WTC11 (cell line): ENCODE measurements at regions of chr11 and their contacts with region 1.

Region 1: DNA sequence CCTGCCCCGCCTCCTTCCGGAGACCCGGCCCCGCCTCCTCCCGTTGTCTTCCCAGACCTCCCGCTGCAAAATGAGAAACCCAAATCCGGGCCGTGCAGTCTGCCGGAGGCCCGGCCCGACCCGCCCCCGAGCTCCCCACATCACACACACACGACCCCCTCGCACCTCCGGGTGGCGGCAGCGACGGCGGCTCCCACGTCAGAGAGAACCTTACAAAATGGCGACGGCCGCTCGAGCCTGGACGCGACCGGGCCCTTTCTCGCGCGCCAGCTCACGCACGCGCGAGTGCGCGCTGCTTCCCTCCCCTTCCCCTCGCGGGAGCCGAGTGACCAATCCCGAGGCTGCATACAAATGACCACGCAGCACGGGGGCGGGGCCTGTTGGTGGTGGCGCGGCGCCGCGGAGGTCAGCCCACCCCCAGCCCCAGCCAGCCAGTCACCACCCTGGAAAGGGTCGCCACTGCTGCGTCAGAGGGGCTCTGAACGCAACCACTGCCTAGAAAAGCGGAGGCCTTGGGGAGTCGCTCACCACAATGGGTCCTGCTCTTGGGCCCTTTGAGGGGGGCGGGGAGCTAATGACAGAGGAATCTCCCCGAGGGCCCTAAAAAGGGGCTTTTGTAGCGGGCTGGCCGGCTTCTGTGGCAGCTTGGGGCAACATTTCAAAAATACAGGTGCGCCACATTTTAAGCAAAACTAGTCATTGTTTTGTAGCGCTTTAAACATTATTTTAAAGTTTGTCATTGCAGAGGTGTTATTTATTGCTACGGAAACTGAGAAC is at the start of gene RBM4B:
- DNase-seq: peak; percentile 98
- ATAC-seq: peak; percentile 95
- H3K4me3 Mint-ChIP-seq: peak within 1 kb of the TSS; percentile 89
- H3K27ac Mint-ChIP-seq: peak within 1 kb of the TSS; percentile 100
- H3K4me1 Mint-ChIP-seq: peaks cover 29% of the 10 kb centered on the region
- H3K27me3 Mint-ChIP-seq: no peaks in the 10 kb centered on the region
- CTCF ChIP-seq: no peak
- total RNA-seq, gene RBM4B: 14.1 to 21.3 TPM (median 20.3 TPM) in 3 replicates

Region 2: DNA sequence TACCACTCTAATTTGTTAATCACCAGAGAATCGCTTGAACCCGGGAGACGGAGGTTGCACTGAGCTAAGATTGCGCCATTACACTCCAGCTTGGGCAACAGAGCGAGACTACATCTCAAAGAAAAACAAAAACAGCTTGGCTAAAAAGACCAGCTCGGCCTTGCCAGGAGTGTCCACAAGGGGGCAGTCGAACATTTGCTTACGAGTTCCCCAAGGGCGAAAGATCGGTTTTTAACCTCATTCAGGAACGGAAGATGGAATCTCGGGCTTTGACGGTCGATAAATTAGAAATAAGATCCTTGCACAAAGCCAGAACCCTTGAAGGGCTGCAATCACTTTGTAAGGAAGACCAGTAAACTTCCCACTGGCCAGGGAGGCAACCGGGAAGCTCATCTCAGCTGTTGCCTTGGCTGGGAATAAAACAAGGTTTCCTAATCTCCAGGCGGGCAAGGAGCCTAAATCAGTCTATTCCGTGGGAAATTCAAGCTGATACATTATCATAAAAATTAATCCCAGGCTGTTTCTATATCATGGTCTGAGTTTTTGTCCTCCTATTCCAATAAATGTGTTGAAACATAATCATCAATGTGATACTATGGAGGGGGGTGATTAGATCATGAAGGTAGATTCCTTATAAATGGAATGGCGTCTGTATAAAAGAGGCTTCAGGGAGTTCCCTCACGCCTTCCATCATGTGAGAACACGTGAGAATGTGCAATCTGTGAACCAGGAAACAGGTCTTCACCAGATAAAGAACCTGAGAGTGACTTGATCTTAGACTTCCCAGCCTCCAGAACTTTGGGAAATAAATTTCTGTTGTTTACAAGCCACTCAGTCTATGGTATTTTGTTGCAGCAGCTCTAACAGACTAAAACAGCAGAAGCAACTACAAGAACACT is 291.4 kb before region 1 on chr11:
- CTCF ChIA-PET with region 1: interaction called, 22 read pairs
- POLR2A ChIA-PET with region 1: interaction called, 3 read pairs
- DNase-seq: peak; percentile 95
- ATAC-seq: peak; percentile 74
- H3K4me3 Mint-ChIP-seq: peak overlapping the region; percentile 64
- H3K27ac Mint-ChIP-seq: no peak overlapping the region
- H3K4me1 Mint-ChIP-seq: peaks cover 6% of the 10 kb centered on the region; the same call in 1 of the 2 replicates
- H3K27me3 Mint-ChIP-seq: peaks cover 13% of the 10 kb centered on the region
- CTCF ChIP-seq: peak; percentile 79

Region 3: DNA sequence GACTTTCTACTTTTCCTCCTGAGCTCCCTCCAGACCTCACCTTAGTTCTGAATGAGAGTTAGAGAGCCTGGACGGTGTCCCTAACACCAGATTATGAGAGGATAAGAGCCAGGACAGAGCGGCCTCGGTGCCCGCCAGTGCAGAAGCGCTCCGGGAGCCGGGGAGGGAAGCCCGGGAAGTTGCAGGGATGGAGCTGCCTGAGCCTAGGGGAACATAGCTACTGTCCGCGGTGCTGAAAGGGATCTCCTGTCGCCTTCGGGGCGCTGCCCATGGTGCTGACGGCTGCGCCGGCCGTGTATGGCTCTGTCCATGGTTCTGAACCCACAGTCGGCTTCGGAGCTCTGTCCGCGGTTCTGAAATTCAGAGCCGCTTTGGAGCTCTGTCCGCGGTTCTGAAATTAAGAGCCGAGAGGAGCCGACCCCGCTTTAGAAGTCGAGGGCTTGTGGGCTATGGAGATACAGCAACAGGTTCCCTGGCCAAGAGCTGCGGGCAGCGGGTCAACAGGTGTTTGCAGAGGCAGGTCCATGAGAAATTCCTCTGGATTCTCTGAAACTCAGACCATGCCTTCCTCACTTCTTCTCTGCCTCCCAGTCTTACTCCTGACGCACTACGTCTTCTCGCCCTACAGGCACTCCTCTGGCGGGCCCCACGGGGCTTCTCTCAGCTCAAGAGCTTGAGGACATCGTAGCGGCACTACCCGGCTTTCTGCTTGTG is 256.1 kb before region 1 on chr11:
- CTCF ChIA-PET with region 1: interaction called, 42 read pairs
- POLR2A ChIA-PET with region 1: interaction called, 5 read pairs
- DNase-seq: peak; percentile 95
- ATAC-seq: peak; percentile 55
- H3K4me3 Mint-ChIP-seq: peak overlapping the region; percentile 68
- H3K27ac Mint-ChIP-seq: no peak overlapping the region
- H3K4me1 Mint-ChIP-seq: peaks cover 27% of the 10 kb centered on the region
- H3K27me3 Mint-ChIP-seq: peaks cover 77% of the 10 kb centered on the region
- CTCF ChIP-seq: no peak

Region 4: GRCh38 chr11:66480117-66480938 is 197.5 kb before region 1 on chr11 and contains the start of gene DPP3:
- CTCF ChIA-PET with region 1: interaction called, 26 read pairs
- POLR2A ChIA-PET with region 1: interaction called, 17 read pairs
- DNase-seq: peak; percentile 99
- ATAC-seq: peak; percentile 90
- H3K4me3 Mint-ChIP-seq: peak within 1 kb of the TSS; percentile 95
- H3K27ac Mint-ChIP-seq: peak within 1 kb of the TSS; percentile 95
- H3K4me1 Mint-ChIP-seq: peaks cover 26% of the 10 kb centered on the region
- H3K27me3 Mint-ChIP-seq: no peaks in the 10 kb centered on the region
- CTCF ChIP-seq: no peak
- total RNA-seq, gene DPP3: 77.0 to 86.7 TPM (median 83.4 TPM) in 3 replicates

Region 5: DNA sequence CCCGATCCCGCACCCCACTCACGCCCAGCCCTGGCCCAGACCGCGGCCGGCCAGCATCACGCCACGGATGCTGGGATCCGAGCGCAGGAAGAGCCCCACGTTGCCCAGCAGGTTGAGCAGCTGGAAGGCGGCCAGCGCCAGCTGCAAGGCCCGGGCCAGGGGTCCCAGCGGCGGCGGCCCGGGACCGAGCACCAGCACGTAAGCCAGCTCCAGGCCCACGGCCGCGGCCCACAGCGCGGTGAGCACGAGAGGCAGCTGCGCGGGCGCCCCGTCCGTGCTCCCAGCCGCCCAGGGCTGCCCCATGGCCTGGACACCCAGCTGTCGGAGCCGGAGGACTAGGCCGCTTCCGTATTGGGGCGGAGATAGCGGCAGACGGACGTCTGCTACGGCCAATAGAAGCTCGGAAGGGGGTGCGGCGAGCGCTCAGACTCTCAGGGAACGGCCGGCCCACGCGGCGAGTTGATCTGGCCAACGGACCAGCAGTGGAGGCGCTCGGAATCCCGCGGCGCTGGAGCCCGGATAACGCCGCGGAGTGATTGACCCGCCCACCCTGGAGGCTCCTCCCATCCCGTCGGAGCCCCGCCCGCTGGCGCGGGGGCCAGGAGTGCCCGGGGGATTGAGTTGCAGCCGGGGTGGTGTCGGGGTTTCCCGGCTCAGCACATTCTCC is 132.0 kb before region 1 on chr11 and contains the start of gene ZDHHC24:
- CTCF ChIA-PET with region 1: interaction called, 34 read pairs
- POLR2A ChIA-PET with region 1: interaction called, 23 read pairs
- DNase-seq: peak; percentile 98
- ATAC-seq: peak; percentile 85
- H3K4me3 Mint-ChIP-seq: peak within 1 kb of the TSS; percentile 85
- H3K27ac Mint-ChIP-seq: peak within 1 kb of the TSS; percentile 93
- H3K4me1 Mint-ChIP-seq: peaks cover 38% of the 10 kb centered on the region
- H3K27me3 Mint-ChIP-seq: no peaks in the 10 kb centered on the region
- CTCF ChIP-seq: no peak
- total RNA-seq, gene ZDHHC24: 11.1 to 14.8 TPM (median 13.7 TPM) in 3 replicates

Region 6: DNA sequence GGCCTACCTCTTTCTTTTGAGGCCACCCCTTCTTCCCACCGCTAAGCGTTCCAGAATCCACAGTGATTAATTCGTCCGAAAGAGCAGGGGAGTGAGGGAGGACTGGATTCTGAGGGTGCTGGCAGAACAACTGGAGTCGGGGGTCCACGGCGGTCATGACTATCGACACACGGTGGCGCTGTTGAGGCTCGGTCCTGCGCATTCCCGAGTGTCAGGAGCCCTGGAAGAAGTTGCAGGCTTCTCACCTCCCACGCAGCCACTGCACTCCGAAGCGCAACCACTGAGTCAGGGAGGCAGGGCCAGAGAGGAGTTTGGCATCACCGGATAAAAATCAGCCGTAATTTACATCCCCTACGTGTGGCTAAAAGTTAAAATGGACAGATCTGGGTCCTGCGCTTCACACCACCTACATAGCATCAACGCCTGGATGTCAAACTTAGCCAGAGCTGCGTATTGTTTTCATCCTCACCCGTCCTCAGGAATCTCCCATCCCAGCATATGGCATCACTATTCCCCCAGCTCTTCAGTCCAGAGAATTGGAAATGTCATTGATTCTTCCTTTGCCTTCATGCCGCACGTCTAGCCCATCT is 98.7 kb before region 1 on chr11:
- CTCF ChIA-PET with region 1: interaction called, 11 read pairs
- POLR2A ChIA-PET with region 1: interaction called, 3 read pairs
- DNase-seq: peak; percentile 88
- ATAC-seq: peak; percentile 95
- H3K4me3 Mint-ChIP-seq: no peak overlapping the region
- H3K27ac Mint-ChIP-seq: no peak overlapping the region
- H3K4me1 Mint-ChIP-seq: peaks cover 3% of the 10 kb centered on the region; the same call in 1 of the 2 replicates
- H3K27me3 Mint-ChIP-seq: peaks cover 40% of the 10 kb centered on the region
- CTCF ChIP-seq: peak; percentile 82

Region 7: DNA sequence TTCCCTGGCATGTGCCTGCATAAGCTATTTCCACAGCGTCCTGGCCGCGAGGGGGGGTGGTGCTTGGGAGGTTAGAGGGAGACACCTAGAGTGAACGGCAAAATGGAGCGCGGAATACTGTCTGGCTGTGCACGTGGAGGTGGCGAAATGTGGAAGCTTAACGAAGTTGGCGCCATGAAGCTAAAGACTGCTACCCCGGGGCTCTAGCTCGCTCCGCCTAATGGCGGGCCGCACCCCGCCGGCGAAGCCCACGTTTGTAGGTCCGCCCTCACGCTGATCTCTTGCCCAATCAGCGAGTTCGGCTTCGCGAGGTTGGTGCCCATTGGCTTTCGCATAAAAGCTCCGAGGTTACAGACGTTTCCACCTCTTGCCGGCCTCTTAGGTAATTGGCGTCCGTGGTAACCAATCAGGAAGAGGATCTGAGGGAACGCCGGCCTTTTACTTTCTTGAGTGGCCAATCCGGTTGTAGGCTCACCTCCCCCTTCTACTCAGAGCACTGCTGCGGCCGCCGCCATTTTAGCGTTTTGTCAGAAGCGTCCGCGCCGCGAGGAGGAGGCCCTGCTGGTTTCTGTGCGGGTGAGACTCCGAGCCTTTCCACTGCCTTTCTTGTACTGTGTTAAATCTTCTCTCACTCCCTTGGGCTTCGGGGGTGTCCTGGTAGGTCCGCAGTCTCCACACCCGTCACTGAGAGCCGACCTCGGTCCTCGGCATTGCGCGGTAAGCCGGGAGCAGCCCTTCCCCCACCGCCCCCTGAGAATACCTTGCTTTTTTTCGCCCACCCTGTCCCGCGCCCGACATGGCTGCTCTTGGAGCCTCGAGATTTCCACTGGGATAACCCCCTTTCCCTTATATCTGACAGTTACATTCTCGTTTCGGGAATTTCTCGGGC is 39.4 kb before region 1 on chr11 and contains the start of gene RBM4:
- CTCF ChIA-PET with region 1: interaction called, 21 read pairs
- POLR2A ChIA-PET with region 1: interaction called, 27 read pairs
- DNase-seq: peak; percentile 97
- ATAC-seq: peak; percentile 96
- H3K4me3 Mint-ChIP-seq: peak within 1 kb of the TSS; percentile 99
- H3K27ac Mint-ChIP-seq: peak within 1 kb of the TSS; percentile 99
- H3K4me1 Mint-ChIP-seq: peaks cover 60% of the 10 kb centered on the region
- H3K27me3 Mint-ChIP-seq: no peaks in the 10 kb centered on the region
- CTCF ChIP-seq: no peak
- total RNA-seq, gene RBM4: 144 to 163 TPM (median 154 TPM) in 3 replicates

Region 8: GRCh38 chr11:66782724-66783123 is 104.9 kb after region 1 on chr11:
- CTCF ChIA-PET with region 1: no interaction called
- POLR2A ChIA-PET with region 1: no interaction called
- DNase-seq: no peak
- ATAC-seq: no peak
- H3K4me3 Mint-ChIP-seq: no peak overlapping the region
- H3K27ac Mint-ChIP-seq: no peak overlapping the region
- H3K4me1 Mint-ChIP-seq: no peaks in the 10 kb centered on the region
- H3K27me3 Mint-ChIP-seq: no peaks in the 10 kb centered on the region
- CTCF ChIP-seq: no peak